H1 (cell line): ENCODE measurements at regions of chr12 and their contacts with region 1.

Region 1: GRCh38 chr12:5442251-5443006 is 10.5 kb downstream of the NTF3 start:
- DNase-seq: no peak
- H3K4me3 ChIP-seq: no peak overlapping the region
- H3K27ac ChIP-seq: no peak overlapping the region
- H3K4me1 ChIP-seq: peaks cover 2 to 8% (median 3%) of the 10 kb centered on the region in 4 experiments; a peak in 4 of 7 replicates
- H3K27me3 ChIP-seq: no peaks in the 10 kb centered on the region; a peak in 1 of 7 replicates
- CTCF ChIP-seq: peak; percentile 7 to 73 (median 61)
- EP300 ChIP-seq: no peak
- POLR2A ChIP-seq: no peak
- RAD21 ChIP-seq: peak; percentile 80 to 87

Region 2: DNA sequence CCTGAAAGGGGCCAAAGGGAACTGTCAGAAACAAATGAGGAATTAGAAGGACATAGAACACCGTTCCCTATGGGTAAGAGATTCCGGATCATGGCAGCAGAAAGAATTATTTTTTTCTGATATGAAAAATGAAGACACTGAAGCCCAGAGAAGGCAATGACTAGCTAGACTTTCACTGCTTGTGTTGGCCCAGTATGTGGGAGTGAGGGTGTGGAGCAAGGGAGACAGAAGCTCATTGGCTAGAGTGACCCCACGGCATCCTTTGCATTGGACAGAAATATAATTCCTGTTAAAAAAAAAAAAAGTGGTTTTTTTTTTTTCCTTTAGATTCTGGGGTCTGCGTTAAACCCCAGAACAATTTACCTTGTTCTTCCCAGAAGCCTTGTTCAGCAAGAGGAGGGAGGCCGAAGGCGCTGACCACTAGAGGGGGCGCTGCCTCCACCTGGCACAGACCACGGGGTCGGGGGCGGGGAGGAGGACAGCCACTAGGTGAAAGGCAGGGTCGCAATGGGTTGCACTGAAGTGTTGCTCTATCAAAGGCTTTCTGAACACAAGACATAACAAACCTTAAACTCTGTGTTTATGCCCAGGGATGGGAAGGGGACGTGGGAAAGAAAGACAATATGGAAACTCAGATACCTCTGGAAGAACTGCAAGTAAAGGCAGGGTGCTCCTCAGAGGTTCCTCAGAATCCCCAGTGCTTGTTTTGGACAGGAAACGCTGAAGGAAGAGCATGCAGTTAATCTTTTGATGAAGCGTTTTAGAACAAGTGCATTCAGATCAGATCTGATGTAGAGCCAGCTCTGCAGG is 241.9 kb before region 1 on chr12:
- CTCF ChIA-PET with region 1: interaction called, 16 read pairs
- POLR2A ChIA-PET with region 1: no interaction called
- DNase-seq: peak; percentile 58 to 93
- H3K4me3 ChIP-seq: no peak overlapping the region
- H3K27ac ChIP-seq: no peak overlapping the region
- H3K4me1 ChIP-seq: peaks cover 3 to 22% (median 10%) of the 10 kb centered on the region in 4 experiments; a peak in 5 of 7 replicates
- H3K27me3 ChIP-seq: no peaks in the 10 kb centered on the region; a peak in 1 of 7 replicates
- CTCF ChIP-seq: peak; percentile 83 to 95 (median 89)
- EP300 ChIP-seq: no peak
- POLR2A ChIP-seq: no peak
- RAD21 ChIP-seq: peak; percentile 96

Region 3: DNA sequence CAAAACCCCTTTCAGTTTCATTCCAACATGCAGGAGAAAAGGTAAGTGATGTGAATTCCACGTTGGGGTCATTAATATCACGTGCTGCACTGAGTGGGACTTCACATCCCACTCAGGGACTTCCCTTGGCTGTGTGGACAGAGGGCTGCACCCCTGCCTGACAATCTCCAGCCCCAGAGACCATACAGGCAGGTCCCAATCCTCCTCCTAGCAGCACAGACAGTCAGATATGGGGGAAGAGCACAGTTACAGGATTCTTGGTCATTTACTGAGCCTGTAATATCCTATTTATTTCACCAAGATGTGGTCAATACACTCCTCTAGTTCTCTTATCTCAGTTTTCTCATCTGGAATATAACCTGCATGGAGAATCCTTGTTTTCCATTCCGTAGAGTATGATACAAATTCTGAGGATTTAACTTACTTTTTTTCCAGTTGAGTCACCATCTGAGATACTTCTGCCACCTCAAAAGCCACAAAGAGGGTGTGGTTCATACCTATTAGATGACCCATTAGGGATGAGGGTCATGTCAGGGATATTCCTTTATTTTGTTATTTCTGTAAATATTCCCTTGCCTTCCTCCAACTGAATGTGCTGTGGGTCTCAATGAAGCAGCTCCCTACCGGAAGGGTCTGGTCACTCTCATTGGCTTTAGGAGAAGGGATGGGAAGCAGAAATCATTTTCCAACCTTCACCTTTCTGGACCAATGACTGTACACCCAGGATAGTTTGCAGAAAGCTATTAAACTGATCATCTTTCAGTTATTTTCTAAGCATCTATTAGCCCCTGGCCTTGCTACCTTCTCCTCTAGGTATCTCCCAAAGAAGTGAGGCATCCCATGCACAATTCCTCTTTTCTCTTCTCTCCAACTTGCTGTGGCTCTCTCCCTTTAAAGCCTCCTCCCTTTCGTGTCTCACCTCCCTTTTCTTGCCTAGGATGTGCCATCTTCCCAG is 53.6 kb before region 1 on chr12:
- CTCF ChIA-PET with region 1: no interaction called
- POLR2A ChIA-PET with region 1: no interaction called
- DNase-seq: no peak
- H3K4me3 ChIP-seq: no peak overlapping the region
- H3K27ac ChIP-seq: no peak overlapping the region
- H3K4me1 ChIP-seq: no peaks in the 10 kb centered on the region
- H3K27me3 ChIP-seq: no peaks in the 10 kb centered on the region; a peak in 1 of 7 replicates
- CTCF ChIP-seq: no peak
- EP300 ChIP-seq: no peak
- POLR2A ChIP-seq: no peak
- RAD21 ChIP-seq: no peak

Region 4: GRCh38 chr12:5480218-5480937 is 37.9 kb after region 1 on chr12:
- CTCF ChIA-PET with region 1: interaction called, 13 read pairs
- POLR2A ChIA-PET with region 1: no interaction called
- DNase-seq: peak; percentile 19 to 73
- H3K4me3 ChIP-seq: peak overlapping the region; percentile 32 to 55 (median 41)
- H3K27ac ChIP-seq: peak overlapping the region; percentile 69; the same call in 1 of the 2 replicates
- H3K4me1 ChIP-seq: peaks cover 3 to 18% (median 11%) of the 10 kb centered on the region in 4 experiments; a peak in 6 of 7 replicates
- H3K27me3 ChIP-seq: peaks cover 0 to 6% (median 0%) of the 10 kb centered on the region in 4 experiments; a peak in 4 of 7 replicates
- CTCF ChIP-seq: no peak
- EP300 ChIP-seq: no peak
- POLR2A ChIP-seq: peak; percentile 13 to 38; a peak in 1 of 3 replicates
- RAD21 ChIP-seq: no peak

Region 5: DNA sequence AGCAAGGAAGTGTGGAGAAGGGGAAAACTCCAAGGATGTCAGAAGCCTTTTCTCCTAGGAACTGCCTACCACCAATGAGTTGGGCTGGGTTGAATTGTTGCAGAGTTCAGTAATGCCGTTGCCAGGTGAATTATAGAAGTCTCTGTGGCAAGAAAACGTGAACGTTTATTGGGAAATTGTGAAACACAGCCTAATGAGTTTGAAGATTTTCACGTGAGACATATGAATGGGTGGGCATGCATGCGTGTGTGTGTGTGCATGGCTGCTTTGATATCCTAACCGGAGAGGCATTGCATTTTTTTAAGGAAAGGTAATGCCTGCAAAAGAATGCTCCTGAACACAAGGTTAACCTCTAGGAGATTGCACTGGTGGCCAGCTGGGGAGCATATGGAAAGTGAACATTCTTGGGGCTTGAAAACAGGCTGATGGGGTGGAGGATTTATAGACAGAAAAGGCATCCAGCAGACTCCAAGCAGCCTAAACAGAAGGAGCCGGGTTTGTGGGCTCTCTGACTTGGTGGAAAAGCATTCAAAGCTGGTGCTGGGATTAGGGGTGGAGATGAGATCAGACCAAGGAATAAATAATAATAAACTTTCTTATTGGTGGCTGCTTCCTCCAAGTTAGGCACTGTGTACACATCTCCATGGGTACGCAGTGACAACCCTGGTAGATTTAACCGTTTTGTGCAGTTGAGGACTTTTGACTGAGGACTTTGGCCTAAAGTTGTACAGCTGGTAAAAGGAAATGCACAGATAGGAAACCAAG is 57.3 kb after region 1 on chr12:
- CTCF ChIA-PET with region 1: no interaction called
- POLR2A ChIA-PET with region 1: no interaction called
- DNase-seq: no peak
- H3K4me3 ChIP-seq: no peak overlapping the region
- H3K27ac ChIP-seq: no peak overlapping the region
- H3K4me1 ChIP-seq: no peaks in the 10 kb centered on the region; a peak in 2 of 7 replicates
- H3K27me3 ChIP-seq: no peaks in the 10 kb centered on the region
- CTCF ChIP-seq: no peak
- EP300 ChIP-seq: no peak
- POLR2A ChIP-seq: no peak
- RAD21 ChIP-seq: no peak